CD14-positive monocyte (primary cell): ENCODE measurements at regions of chr6 and their contacts with region 1.

Region 1: DNA sequence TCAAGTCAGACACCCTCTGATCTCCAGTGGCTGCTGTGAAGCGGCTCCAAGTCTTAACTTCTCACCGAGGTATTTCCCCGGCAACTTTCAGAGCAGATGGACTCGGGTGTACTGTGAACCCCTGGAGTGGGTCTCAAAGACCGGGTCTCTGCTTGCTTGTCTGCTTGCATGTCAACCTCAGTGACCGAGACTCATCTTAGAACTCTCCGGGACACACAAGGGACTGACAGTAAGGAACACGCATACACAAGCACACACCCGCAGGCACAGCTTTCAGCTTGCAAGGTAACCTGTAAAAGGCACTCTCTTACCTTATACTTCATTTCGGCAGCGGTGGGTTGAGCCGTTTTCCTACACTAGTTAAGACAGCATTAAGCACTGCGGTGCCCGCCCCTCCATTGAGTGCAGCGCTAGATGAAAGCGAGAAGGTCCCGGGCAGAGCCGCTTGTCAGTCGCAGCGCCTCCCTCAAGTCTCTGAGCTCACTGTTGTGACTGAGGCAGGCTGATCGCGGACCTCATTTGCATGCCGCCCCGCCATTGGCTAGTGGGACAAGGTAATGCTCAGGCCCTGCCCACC is at the start of gene NEDD9:
- DNase-seq: peak; percentile 89 to 96 (median 92)
- H3K4me3 ChIP-seq: peak within 1 kb of the TSS; percentile 52 to 98 (median 88)
- H3K4me3 Mint-ChIP-seq: peak within 1 kb of the TSS; percentile 94 to 99
- H3K27ac ChIP-seq: peak within 1 kb of the TSS; percentile 45 to 80
- H3K27ac Mint-ChIP-seq: peak within 1 kb of the TSS; percentile 96 to 100 (median 97)
- H3K4me1 ChIP-seq: peaks cover 27 to 40% of the 10 kb centered on the region in 2 donors
- H3K4me1 Mint-ChIP-seq: peaks cover 50% of the 10 kb centered on the region
- H3K27me3 ChIP-seq: peaks cover 0 to 3% of the 10 kb centered on the region in 2 donors
- H3K27me3 Mint-ChIP-seq: peaks cover 0 to 6% (median 4%) of the 10 kb centered on the region in 3 donors
- CTCF ChIP-seq: no peak
- polyA plus RNA-seq, gene NEDD9: 18.2 to 35.9 (median 33.0) TPM

Region 2: GRCh38 chr6:11172501-11173332 is 59.6 kb before region 1 on chr6:
- intact Hi-C with region 1: loop called in 1 of 2 experiments (anchors 5 kb)
- DNase-seq: peak; percentile 46 to 62 (median 54)
- H3K4me3 ChIP-seq: no peak overlapping the region
- H3K4me3 Mint-ChIP-seq: peak overlapping the region in 1 of 2 donors; percentile 43
- H3K27ac ChIP-seq: no peak overlapping the region
- H3K27ac Mint-ChIP-seq: peak overlapping the region in 3 of 7 donors; percentile 9 to 52 (median 50)
- H3K4me1 ChIP-seq: peaks cover 8 to 11% of the 10 kb centered on the region in 2 donors
- H3K4me1 Mint-ChIP-seq: peaks cover 19% of the 10 kb centered on the region
- H3K27me3 ChIP-seq: no peaks in the 10 kb centered on the region
- H3K27me3 Mint-ChIP-seq: peaks cover 1 to 6% (median 2%) of the 10 kb centered on the region in 3 donors
- CTCF ChIP-seq: peak; percentile 91